SK-N-SH (cell line): ENCODE measurements at regions of chr13 and their contacts with region 1.

Region 1: DNA sequence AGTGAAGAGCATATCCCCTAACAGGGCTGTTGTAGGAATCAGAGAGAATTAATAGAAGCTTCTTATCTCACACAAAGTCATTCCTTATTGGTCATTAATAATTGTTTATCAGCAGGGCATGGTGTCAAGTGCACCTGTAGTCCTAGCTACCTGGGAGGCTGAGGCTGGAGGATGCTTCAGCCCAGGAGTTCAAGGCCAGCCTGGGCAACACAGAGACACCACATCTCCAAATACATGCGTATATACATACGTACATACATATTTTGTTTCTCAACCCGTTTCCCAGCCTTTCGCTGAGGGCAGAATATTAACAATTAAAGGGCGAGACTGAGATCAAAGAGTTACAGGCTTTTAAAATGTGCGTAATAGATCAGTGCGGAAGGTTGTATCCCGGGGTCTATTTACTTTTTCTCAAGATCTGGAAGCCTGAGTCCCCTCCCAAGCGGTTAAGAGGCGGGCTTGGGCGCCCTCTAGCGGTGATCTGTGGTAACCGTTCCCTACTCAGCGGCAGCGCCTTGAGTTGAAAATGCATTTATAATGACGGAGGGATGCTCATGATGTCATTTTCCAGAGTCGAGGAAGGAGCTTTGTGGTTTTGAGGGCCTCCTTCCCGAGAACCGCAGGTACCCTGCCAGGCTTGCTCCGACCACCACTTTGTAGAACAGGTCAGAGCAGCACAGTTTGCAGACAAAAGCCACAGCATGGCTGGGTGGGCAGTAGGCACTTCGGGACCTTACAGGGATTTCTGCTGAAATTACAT is 169.6 kb upstream of the GPR12 start:
- DNase-seq: peak; percentile 79
- H3K4me3 ChIP-seq: peak overlapping the region; percentile 31 to 51
- H3K27ac ChIP-seq: no peak overlapping the region
- H3K4me1 ChIP-seq: peaks cover 0 to 2% of the 10 kb centered on the region in 2 experiments; a peak in 1 of 4 replicates
- H3K27me3 ChIP-seq: 0 out of 2 replicates have a peak, but pooled peaks cover 2% of the 10 kb centered on the region
- CTCF ChIP-seq: peak; percentile 97
- EP300 ChIP-seq: no peak
- RAD21 ChIP-seq: peak; percentile 89

Region 2: DNA sequence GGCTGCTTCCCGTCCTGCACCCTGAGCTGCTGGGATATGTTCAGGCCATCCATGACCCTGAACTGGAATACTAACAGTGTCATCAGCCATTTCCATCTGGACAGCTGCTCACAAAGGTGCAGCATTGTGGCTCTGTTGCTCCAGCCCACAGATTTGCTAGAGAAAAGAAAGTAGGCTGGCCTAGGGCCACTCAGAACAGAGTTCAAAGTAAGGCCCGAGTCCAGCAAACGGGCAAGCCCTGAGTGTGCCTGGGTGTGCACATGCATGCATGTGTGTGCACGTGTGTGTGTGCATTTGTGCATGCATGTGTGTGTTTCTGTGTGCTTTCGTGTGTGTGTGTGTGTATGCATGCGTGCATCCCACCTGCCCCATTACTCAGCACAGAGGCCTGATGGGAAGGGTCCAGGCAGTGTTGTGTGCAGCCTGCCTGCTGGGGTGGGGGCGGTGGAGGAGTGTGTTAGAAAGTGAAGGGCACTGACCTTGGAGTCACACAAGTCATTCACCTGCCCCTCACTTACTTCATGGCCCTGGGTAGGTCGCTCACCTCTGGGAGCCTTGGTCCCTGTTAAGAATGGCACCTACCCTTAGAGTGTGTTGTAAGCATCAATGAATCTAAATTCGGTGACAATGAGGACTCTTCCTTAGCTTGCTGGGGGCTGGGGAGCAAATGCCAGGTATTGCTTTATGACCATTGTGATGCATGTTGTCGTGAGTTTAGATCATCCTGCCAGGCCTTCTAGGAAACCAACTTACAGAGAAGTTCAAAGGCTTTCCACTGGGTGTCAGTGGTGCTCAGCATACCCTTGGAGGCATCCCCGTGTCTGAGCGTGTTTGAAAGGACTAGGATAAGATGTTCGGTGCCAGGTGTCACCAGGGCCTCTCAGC is 222.8 kb before region 1 on chr13:
- CTCF ChIA-PET with region 1: interaction called, 74 read pairs
- POLR2A ChIA-PET with region 1: no interaction called
- DNase-seq: peak; percentile 77
- H3K4me3 ChIP-seq: no peak overlapping the region
- H3K27ac ChIP-seq: no peak overlapping the region
- H3K4me1 ChIP-seq: no peaks in the 10 kb centered on the region; a peak in 1 of 4 replicates
- H3K27me3 ChIP-seq: no peaks in the 10 kb centered on the region
- CTCF ChIP-seq: peak; percentile 59
- EP300 ChIP-seq: no peak
- RAD21 ChIP-seq: peak; percentile 92

Region 3: GRCh38 chr13:26721251-26722121 is 208.7 kb before region 1 on chr13:
- CTCF ChIA-PET with region 1: interaction called, 13 read pairs
- POLR2A ChIA-PET with region 1: no interaction called
- DNase-seq: no peak
- H3K4me3 ChIP-seq: no peak overlapping the region
- H3K27ac ChIP-seq: no peak overlapping the region
- H3K4me1 ChIP-seq: no peaks in the 10 kb centered on the region; a peak in 1 of 4 replicates
- H3K27me3 ChIP-seq: no peaks in the 10 kb centered on the region; the same call in 1 of the 2 replicates
- CTCF ChIP-seq: no peak
- EP300 ChIP-seq: no peak
- RAD21 ChIP-seq: no peak

Region 4: GRCh38 chr13:26914624-26915023 is 15.5 kb before region 1 on chr13:
- CTCF ChIA-PET with region 1: interaction called, 32 read pairs
- POLR2A ChIA-PET with region 1: no interaction called
- DNase-seq: no peak
- H3K4me3 ChIP-seq: no peak overlapping the region
- H3K27ac ChIP-seq: no peak overlapping the region
- H3K4me1 ChIP-seq: no peaks in the 10 kb centered on the region; a peak in 1 of 4 replicates
- H3K27me3 ChIP-seq: no peaks in the 10 kb centered on the region
- CTCF ChIP-seq: no peak
- EP300 ChIP-seq: no peak
- RAD21 ChIP-seq: no peak

Region 5: DNA sequence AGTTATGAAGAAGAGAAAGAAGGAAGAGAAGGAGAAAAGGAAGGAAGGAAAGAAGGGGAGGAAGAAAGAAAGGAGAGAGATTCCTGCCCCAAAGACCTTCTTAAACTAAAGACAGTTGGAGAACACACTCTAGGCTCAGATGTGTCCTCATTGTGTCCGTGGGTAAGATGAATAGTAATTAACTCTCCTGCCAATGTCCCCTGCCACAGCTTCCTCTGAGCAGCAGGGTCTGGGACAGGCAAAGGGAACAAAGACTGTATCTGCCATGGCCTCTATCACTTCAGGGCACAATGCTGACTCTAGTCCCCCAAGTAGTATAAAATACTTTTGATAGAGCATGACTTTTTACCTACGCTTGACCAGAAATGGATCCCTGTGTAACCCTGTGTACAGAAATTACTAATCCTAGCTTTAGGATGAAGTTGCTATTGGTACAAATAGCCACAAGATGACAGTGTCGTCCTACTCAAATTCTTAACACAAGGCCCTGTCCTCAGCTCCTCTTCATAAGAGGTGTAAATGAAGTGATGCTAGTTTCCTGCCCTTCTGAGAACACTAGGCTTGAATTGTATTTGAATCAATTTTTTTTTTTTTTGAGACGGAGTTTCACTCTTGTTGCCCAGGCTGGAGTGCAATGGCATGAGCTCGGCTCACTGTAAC is 16.7 kb after region 1 on chr13:
- CTCF ChIA-PET with region 1: interaction called, 37 read pairs
- POLR2A ChIA-PET with region 1: interaction called, 4 read pairs
- DNase-seq: peak; percentile 48
- H3K4me3 ChIP-seq: no peak overlapping the region
- H3K27ac ChIP-seq: no peak overlapping the region
- H3K4me1 ChIP-seq: no peaks in the 10 kb centered on the region
- H3K27me3 ChIP-seq: no peaks in the 10 kb centered on the region
- CTCF ChIP-seq: peak; percentile 80
- EP300 ChIP-seq: no peak
- RAD21 ChIP-seq: peak; percentile 90

Region 6: GRCh38 chr13:27339299-27339698 is 409.1 kb after region 1 on chr13:
- CTCF ChIA-PET with region 1: no interaction called
- POLR2A ChIA-PET with region 1: no interaction called
- DNase-seq: peak; percentile 61
- H3K4me3 ChIP-seq: no peak overlapping the region
- H3K27ac ChIP-seq: no peak overlapping the region
- H3K4me1 ChIP-seq: no peaks in the 10 kb centered on the region; a peak in 1 of 4 replicates
- H3K27me3 ChIP-seq: peaks cover 42% of the 10 kb centered on the region
- CTCF ChIP-seq: peak; percentile 62
- EP300 ChIP-seq: no peak
- RAD21 ChIP-seq: peak; percentile 54